ENCODE measurements at regions of chr1 and their contacts with region 1.

Region 1: DNA sequence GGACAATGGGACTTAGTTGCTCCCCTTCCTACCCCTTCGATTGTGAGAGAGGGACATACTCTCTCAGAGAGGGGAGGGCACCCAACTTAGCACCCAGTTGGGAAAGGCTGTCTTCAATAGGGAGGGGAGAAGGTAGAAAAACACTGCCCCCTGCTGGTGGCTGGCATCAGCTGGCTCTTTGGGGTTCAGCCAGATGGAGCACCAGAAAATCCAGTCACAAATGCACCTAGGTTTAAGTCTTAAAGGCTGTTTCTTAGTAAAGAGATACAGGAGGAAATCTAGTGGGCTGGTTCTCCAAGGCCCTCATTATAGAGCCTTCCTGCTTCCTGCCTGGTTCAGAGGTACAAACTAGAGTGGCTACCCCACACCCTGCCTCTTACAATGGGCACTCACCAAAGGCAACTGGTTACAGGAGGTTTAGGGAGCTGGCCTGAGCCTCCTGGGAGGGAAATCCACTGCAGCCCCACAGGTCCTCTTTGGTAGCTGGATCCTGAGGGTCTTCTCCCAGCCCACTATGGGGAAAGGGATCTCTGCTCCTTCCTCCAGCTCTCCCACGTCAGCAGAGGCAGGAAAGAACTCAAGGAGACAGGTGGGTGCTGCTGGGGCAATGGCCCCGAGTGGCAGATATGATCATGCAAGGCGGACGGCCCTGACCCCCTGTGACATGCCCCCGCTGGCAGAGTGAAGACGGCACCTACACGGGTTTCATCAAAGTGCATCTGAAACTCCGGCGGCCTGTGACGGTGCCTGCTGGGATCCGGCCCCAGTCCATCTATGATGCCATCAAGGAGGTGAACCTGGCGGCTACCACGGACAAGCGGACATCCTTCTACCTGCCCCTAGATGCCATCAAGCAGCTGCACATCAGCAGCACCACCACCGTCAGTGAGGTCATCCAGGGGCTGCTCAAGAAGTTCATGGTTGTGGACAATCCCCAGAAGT is 28.3 kb downstream of the EIF2D start:
- DNase-seq: peak; percentile 67
- H3K4me3 ChIP-seq: no peak overlapping the region
- H3K27ac ChIP-seq: no peak overlapping the region
- H3K4me1 ChIP-seq: no peaks in the 10 kb centered on the region
- H3K27me3 ChIP-seq: peaks cover 0 to 1% of the 10 kb centered on the region in 2 experiments
- CTCF ChIP-seq: peak; percentile 87 to 88
- POLR2A ChIP-seq: no peak

Region 2: GRCh38 chr1:206479183-206480125 is 104.5 kb before region 1 on chr1:
- CTCF ChIA-PET with region 1: interaction called, 97 read pairs
- POLR2A ChIA-PET with region 1: no interaction called
- dilution Hi-C with region 1: no loop called
- intact Hi-C with region 1: loop called (anchors 1 kb)
- DNase-seq: peak; percentile 74
- H3K4me3 ChIP-seq: no peak overlapping the region
- H3K27ac ChIP-seq: no peak overlapping the region
- H3K4me1 ChIP-seq: no peaks in the 10 kb centered on the region
- H3K27me3 ChIP-seq: no peaks in the 10 kb centered on the region
- CTCF ChIP-seq: peak; percentile 76 to 77
- POLR2A ChIP-seq: no peak

Region 3: DNA sequence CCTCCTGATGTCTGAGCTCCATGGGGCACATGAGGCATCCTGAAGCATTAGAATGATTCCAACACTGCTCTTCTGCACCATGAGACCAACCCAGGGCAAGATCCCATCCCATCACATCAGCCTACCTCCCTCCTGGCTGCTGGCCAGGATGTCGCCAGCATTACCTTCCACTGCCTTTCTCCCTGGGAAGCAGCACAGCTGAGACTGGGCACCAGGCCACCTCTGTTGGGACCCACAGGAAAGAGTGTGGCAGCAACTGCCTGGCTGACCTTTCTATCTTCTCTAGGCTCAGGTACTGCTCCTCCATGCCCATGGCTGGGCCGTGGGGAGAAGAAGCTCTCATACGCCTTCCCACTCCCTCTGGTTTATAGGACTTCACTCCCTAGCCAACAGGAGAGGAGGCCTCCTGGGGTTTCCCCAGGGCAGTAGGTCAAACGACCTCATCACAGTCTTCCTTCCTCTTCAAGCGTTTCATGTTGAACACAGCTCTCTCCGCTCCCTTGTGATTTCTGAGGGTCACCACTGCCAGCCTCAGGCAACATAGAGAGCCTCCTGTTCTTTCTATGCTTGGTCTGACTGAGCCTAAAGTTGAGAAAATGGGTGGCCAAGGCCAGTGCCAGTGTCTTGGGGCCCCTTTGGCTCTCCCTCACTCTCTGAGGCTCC is 87.7 kb before region 1 on chr1:
- CTCF ChIA-PET with region 1: interaction called, 85 read pairs
- POLR2A ChIA-PET with region 1: no interaction called
- dilution Hi-C with region 1: no loop called
- intact Hi-C with region 1: no loop called
- DNase-seq: no peak
- H3K4me3 ChIP-seq: no peak overlapping the region
- H3K27ac ChIP-seq: no peak overlapping the region
- H3K4me1 ChIP-seq: peaks cover 2% of the 10 kb centered on the region
- H3K27me3 ChIP-seq: no peaks in the 10 kb centered on the region
- CTCF ChIP-seq: no peak
- POLR2A ChIP-seq: no peak

Region 4: GRCh38 chr1:206537141-206537540 is 46.8 kb before region 1 on chr1:
- CTCF ChIA-PET with region 1: interaction called, 427 read pairs
- POLR2A ChIA-PET with region 1: no interaction called
- dilution Hi-C with region 1: no loop called
- intact Hi-C with region 1: no loop called
- DNase-seq: no peak
- H3K4me3 ChIP-seq: no peak overlapping the region
- H3K27ac ChIP-seq: no peak overlapping the region
- H3K4me1 ChIP-seq: no peaks in the 10 kb centered on the region
- H3K27me3 ChIP-seq: peaks cover 0 to 16% of the 10 kb centered on the region in 2 experiments
- CTCF ChIP-seq: no peak
- POLR2A ChIP-seq: no peak

Region 5: GRCh38 chr1:206551986-206552326 is 32.0 kb before region 1 on chr1:
- CTCF ChIA-PET with region 1: interaction called, 427 read pairs
- POLR2A ChIA-PET with region 1: no interaction called
- dilution Hi-C with region 1: no loop called
- intact Hi-C with region 1: loop called (anchors 1 kb)
- DNase-seq: no peak
- H3K4me3 ChIP-seq: no peak overlapping the region
- H3K27ac ChIP-seq: no peak overlapping the region
- H3K4me1 ChIP-seq: no peaks in the 10 kb centered on the region
- H3K27me3 ChIP-seq: peaks cover 45 to 50% of the 10 kb centered on the region in 2 experiments
- CTCF ChIP-seq: no peak
- POLR2A ChIP-seq: no peak

Region 6: GRCh38 chr1:206568256-206568655 is 15.7 kb before region 1 on chr1:
- CTCF ChIA-PET with region 1: interaction called, 24 read pairs
- POLR2A ChIA-PET with region 1: no interaction called
- dilution Hi-C with region 1: no loop called
- intact Hi-C with region 1: no loop called
- DNase-seq: no peak
- H3K4me3 ChIP-seq: no peak overlapping the region
- H3K27ac ChIP-seq: no peak overlapping the region
- H3K4me1 ChIP-seq: peaks cover 5% of the 10 kb centered on the region
- H3K27me3 ChIP-seq: peaks cover 7 to 12% of the 10 kb centered on the region in 2 experiments
- CTCF ChIP-seq: no peak
- POLR2A ChIP-seq: no peak

Region 7: GRCh38 chr1:206674745-206675175 is 90.8 kb after region 1 on chr1:
- CTCF ChIA-PET with region 1: no interaction called
- POLR2A ChIA-PET with region 1: no interaction called
- dilution Hi-C with region 1: no loop called
- intact Hi-C with region 1: no loop called
- DNase-seq: no peak
- H3K4me3 ChIP-seq: no peak overlapping the region
- H3K27ac ChIP-seq: no peak overlapping the region
- H3K4me1 ChIP-seq: peaks cover 10% of the 10 kb centered on the region
- H3K27me3 ChIP-seq: peaks cover 5 to 14% of the 10 kb centered on the region in 2 experiments
- CTCF ChIP-seq: no peak
- POLR2A ChIP-seq: no peak

Region 8: GRCh38 chr1:206784471-206784903 is 200.5 kb after region 1 on chr1:
- CTCF ChIA-PET with region 1: no interaction called
- POLR2A ChIA-PET with region 1: no interaction called
- dilution Hi-C with region 1: no loop called
- intact Hi-C with region 1: no loop called
- DNase-seq: no peak
- H3K4me3 ChIP-seq: no peak overlapping the region
- H3K27ac ChIP-seq: no peak overlapping the region
- H3K4me1 ChIP-seq: no peaks in the 10 kb centered on the region
- H3K27me3 ChIP-seq: peaks cover 2 to 3% of the 10 kb centered on the region in 2 experiments
- CTCF ChIP-seq: no peak
- POLR2A ChIP-seq: no peak

Region 9: GRCh38 chr1:206925106-206925736 is 341.2 kb after region 1 on chr1:
- CTCF ChIA-PET with region 1: no interaction called
- POLR2A ChIA-PET with region 1: no interaction called
- dilution Hi-C with region 1: no loop called
- intact Hi-C with region 1: no loop called
- DNase-seq: no peak
- H3K4me3 ChIP-seq: no peak overlapping the region
- H3K27ac ChIP-seq: no peak overlapping the region
- H3K4me1 ChIP-seq: no peaks in the 10 kb centered on the region
- H3K27me3 ChIP-seq: no peaks in the 10 kb centered on the region
- CTCF ChIP-seq: no peak
- POLR2A ChIP-seq: no peak